Gastrocnemius medialis (tissue), 4 donors: ENCODE measurements at regions of chr15 and their contacts with region 1.

Region 1: DNA sequence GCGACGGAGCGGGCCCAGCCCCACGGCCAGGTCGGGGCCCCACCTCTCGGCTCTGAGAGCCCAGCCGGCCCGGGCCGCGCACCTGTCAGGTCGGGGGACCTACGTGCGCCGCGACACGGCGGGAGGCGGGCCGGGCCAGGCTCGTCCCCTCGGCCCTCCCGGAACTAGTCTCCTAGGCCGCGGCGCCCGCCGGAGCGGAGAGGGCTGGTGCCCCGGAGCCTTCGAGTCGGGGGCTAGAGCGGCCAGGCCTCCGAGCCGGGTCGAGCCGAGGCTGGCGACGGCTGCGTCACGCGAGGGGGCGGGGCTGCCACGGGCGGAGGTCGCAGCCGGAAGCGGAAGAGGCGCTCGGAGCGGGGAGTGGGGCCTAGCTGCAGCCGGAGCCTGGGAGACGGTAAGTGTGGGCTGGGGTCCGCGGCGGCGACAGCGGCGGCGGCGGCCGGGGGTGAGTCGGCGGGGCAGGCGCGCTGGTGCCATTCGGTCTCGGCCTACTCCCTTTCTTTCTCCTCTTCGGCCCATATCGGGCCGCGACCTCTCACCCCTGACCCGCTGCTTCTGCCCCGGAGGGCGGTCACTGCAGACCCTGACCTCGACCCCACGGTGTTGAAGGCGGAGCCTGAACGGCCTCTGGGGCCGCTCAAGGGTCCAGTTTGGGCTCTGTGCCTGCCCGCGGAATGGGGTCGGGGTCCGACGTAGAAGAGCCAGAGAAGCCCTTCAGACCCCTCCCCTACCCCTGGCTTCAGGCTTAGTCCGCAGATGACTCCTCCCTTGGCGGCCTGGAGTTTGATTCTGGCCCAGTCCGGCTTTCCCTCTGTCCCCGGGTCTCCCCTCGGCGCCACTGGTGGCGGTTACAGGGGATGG is at the start of gene CLK3:
- DNase-seq: peak; percentile 92 to 94
- ATAC-seq: peak; percentile 71 to 73
- H3K4me3 ChIP-seq: peak within 1 kb of the TSS; percentile 74 to 94 (median 86)
- H3K27ac ChIP-seq: peak within 1 kb of the TSS; percentile 94 to 100 (median 96)
- H3K4me1 ChIP-seq: peaks cover 34 to 39% of the 10 kb centered on the region in 2 donors
- H3K27me3 ChIP-seq: no peaks in the 10 kb centered on the region
- CTCF ChIP-seq: no peak
- POLR2A ChIP-seq: peak; percentile 86 to 89
- total RNA-seq, gene CLK3: 45.4 to 152 (median 105) TPM

Region 2: GRCh38 chr15:74251131-74251811 is 364.5 kb before region 1 on chr15:
- in situ Hi-C with region 1: no loop called
- intact Hi-C with region 1: loop called (anchors 10 kb)
- DNase-seq: peak; percentile 91 to 98
- ATAC-seq: peak; percentile 92 to 93
- H3K4me3 ChIP-seq: no peak overlapping the region
- H3K27ac ChIP-seq: peak overlapping the region; percentile 86 to 90 (median 88)
- H3K4me1 ChIP-seq: peaks cover 34 to 37% of the 10 kb centered on the region in 2 donors
- H3K27me3 ChIP-seq: no peaks in the 10 kb centered on the region
- CTCF ChIP-seq: peak in 4 of 5 experiments; percentile 27 to 32 (median 28)
- POLR2A ChIP-seq: peak in 1 of 2 donors; percentile 31

Region 3: DNA sequence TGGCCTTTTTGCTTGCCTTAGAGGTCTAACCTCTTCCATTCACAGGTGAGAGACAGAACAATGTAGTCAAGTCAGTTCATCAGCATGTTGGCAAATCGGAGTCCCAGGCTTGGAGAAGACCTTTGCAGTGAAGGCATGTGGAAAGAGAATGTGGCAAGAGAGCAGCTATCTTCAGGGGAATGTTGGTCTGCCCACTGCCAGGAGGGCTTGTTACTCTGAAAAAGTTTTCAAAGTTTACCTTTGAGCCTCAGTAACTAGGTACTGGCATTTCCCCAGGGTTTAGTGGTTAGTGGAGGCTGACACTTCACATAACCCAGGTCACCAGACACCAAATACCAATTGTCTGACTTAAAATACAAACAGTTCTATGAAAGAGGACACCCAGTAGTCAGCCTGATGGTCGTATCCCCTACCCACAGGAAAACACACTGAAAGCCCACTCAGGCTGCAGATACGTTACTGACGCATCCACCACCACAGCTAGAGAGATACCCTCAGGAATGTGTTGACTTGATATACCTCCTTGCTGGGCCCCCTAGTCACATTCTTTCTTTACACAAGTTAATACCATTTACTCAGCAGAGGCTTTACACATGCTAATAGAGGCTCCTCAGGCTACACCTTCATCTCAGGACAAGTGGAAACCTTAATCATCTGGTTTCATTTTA is 84.5 kb before region 1 on chr15:
- in situ Hi-C with region 1: loop called in 1 of 4 experiments (anchors 5 kb)
- intact Hi-C with region 1: no loop called
- DNase-seq: no peak
- ATAC-seq: no peak
- H3K4me3 ChIP-seq: no peak overlapping the region
- H3K27ac ChIP-seq: no peak overlapping the region
- H3K4me1 ChIP-seq: no peaks in the 10 kb centered on the region
- H3K27me3 ChIP-seq: no peaks in the 10 kb centered on the region
- CTCF ChIP-seq: no peak
- POLR2A ChIP-seq: no peak

Region 4: GRCh38 chr15:74598126-74598842 is 17.5 kb before region 1 on chr15:
- in situ Hi-C with region 1: no loop called
- intact Hi-C with region 1: loop called (anchors 1 kb)
- DNase-seq: peak; percentile 92 to 96
- ATAC-seq: peak; percentile 97 to 98
- H3K4me3 ChIP-seq: peak overlapping the region; percentile 66 to 75 (median 69)
- H3K27ac ChIP-seq: peak overlapping the region; percentile 84 to 92 (median 89)
- H3K4me1 ChIP-seq: peaks cover 18 to 19% of the 10 kb centered on the region in 2 donors
- H3K27me3 ChIP-seq: no peaks in the 10 kb centered on the region
- CTCF ChIP-seq: no peak
- POLR2A ChIP-seq: peak; percentile 59 to 83

Region 5: GRCh38 chr15:74723754-74724334 is 108.1 kb after region 1 on chr15:
- in situ Hi-C with region 1: no loop called
- intact Hi-C with region 1: no loop called
- DNase-seq: no peak
- ATAC-seq: peak; percentile 39 to 55
- H3K4me3 ChIP-seq: no peak overlapping the region
- H3K27ac ChIP-seq: peak overlapping the region in 1 of 4 donors; percentile 69
- H3K4me1 ChIP-seq: peaks cover 13 to 25% of the 10 kb centered on the region in 2 donors
- H3K27me3 ChIP-seq: peaks cover 0 to 5% (median 0%) of the 10 kb centered on the region in 3 donors
- CTCF ChIP-seq: no peak
- POLR2A ChIP-seq: no peak